ENCODE measurements at regions of chr20 and their contacts with region 1.

Region 1: GRCh38 chr20:17904027-17904426 is 64.6 kb downstream of the SNX5 start:
- DNase-seq: no peak
- ATAC-seq: no peak
- H3K4me3 ChIP-seq: no peak overlapping the region
- H3K27ac ChIP-seq: no peak overlapping the region
- H3K4me1 ChIP-seq: no peaks in the 10 kb centered on the region
- H3K27me3 ChIP-seq: no peaks in the 10 kb centered on the region
- CTCF ChIP-seq: no peak
- POLR2A ChIP-seq: no peak

Region 2: GRCh38 chr20:17536944-17537444 is 367.0 kb before region 1 on chr20:
- intact Hi-C with region 1: loop called in 8 of 10 experiments (anchors 2 to 10 kb)
- DNase-seq: peak in 4 of 5 donors; percentile 54 to 75 (median 69)
- ATAC-seq: peak; percentile 93 to 99 (median 98)
- H3K4me3 ChIP-seq: no peak overlapping the region
- H3K27ac ChIP-seq: peak overlapping the region in 2 of 12 donors; percentile 7 to 64
- H3K4me1 ChIP-seq: peaks cover 0 to 11% (median 0%) of the 10 kb centered on the region in 12 donors
- H3K27me3 ChIP-seq: no peaks in the 10 kb centered on the region
- CTCF ChIP-seq: peak; percentile 72 to 93 (median 88)
- POLR2A ChIP-seq: no peak

Region 3: GRCh38 chr20:17654649-17655285 is 249.3 kb before region 1 on chr20:
- intact Hi-C with region 1: loop called in 3 of 10 experiments (anchors 5 to 10 kb)
- DNase-seq: peak in 1 of 5 donors; percentile 23
- ATAC-seq: no peak
- H3K4me3 ChIP-seq: no peak overlapping the region
- H3K27ac ChIP-seq: no peak overlapping the region
- H3K4me1 ChIP-seq: peaks cover 0 to 46% (median 29%) of the 10 kb centered on the region in 12 donors
- H3K27me3 ChIP-seq: no peaks in the 10 kb centered on the region
- CTCF ChIP-seq: peak; percentile 25 to 75 (median 60)
- POLR2A ChIP-seq: no peak

Region 4: GRCh38 chr20:17938871-17939619 is 35.0 kb after region 1 on chr20:
- intact Hi-C with region 1: no loop called
- DNase-seq: peak in 4 of 5 donors; percentile 53 to 69 (median 66)
- ATAC-seq: peak; percentile 47 to 83 (median 78)
- H3K4me3 ChIP-seq: no peak overlapping the region
- H3K27ac ChIP-seq: peak overlapping the region in 2 of 12 donors; percentile 37 to 38
- H3K4me1 ChIP-seq: peaks cover 0 to 57% (median 24%) of the 10 kb centered on the region in 12 donors
- H3K27me3 ChIP-seq: no peaks in the 10 kb centered on the region
- CTCF ChIP-seq: peak; percentile 80 to 91 (median 88)
- POLR2A ChIP-seq: no peak

Measured in heart left ventricle (tissue), 16 donors.